ENCODE measurements at regions of chr1 and their contacts with region 1.

Region 1: GRCh38 chr1:38990738-38991639 is at the start of gene AKIRIN1:
- DNase-seq: peak; percentile 100
- H3K4me3 Mint-ChIP-seq: peak within 1 kb of the TSS; percentile 77
- H3K27ac Mint-ChIP-seq: peak within 1 kb of the TSS; percentile 87
- H3K4me1 Mint-ChIP-seq: peaks cover 42% of the 10 kb centered on the region
- H3K27me3 Mint-ChIP-seq: no peaks in the 10 kb centered on the region
- CTCF ChIP-seq: no peak
- total RNA-seq, gene AKIRIN1: 69.1 and 75.9 TPM in 2 replicates

Region 2: GRCh38 chr1:38873027-38873969 is 117.7 kb before region 1 on chr1 and contains the start of gene MYCBP:
- CTCF ChIA-PET with region 1: no interaction called
- intact Hi-C with region 1: loop called (anchors 5 kb)
- DNase-seq: peak; percentile 97
- H3K4me3 Mint-ChIP-seq: peak within 1 kb of the TSS; percentile 83
- H3K27ac Mint-ChIP-seq: peak within 1 kb of the TSS; percentile 79
- H3K4me1 Mint-ChIP-seq: peaks cover 14% of the 10 kb centered on the region
- H3K27me3 Mint-ChIP-seq: no peaks in the 10 kb centered on the region
- CTCF ChIP-seq: no peak
- total RNA-seq, gene MYCBP: 25.9 and 33.2 TPM in 2 replicates

Region 3: GRCh38 chr1:38941527-38942019 is 49.4 kb before region 1 on chr1 and contains the start of gene RHBDL2:
- CTCF ChIA-PET with region 1: no interaction called
- intact Hi-C with region 1: loop called (anchors 5 kb)
- DNase-seq: peak; percentile 65
- H3K4me3 Mint-ChIP-seq: peak within 1 kb of the TSS; percentile 91
- H3K27ac Mint-ChIP-seq: peak within 1 kb of the TSS; percentile 34
- H3K4me1 Mint-ChIP-seq: peaks cover 33% of the 10 kb centered on the region
- H3K27me3 Mint-ChIP-seq: no peaks in the 10 kb centered on the region
- CTCF ChIP-seq: no peak
- total RNA-seq, gene RHBDL2: 9.4 and 10.9 TPM in 2 replicates

Measured in Calu3 (cell line).